ENCODE measurements at regions of chr6 and their contacts with region 1.

Region 1: GRCh38 chr6:43608310-43608763 is 20.7 kb downstream of the GTPBP2 start:
- DNase-seq: peak; percentile 72
- ATAC-seq: peak; percentile 42
- H3K4me3 Mint-ChIP-seq: no peak overlapping the region
- H3K27ac Mint-ChIP-seq: no peak overlapping the region
- H3K4me1 Mint-ChIP-seq: peaks cover 3% of the 10 kb centered on the region
- H3K27me3 Mint-ChIP-seq: no peaks in the 10 kb centered on the region

Region 2: DNA sequence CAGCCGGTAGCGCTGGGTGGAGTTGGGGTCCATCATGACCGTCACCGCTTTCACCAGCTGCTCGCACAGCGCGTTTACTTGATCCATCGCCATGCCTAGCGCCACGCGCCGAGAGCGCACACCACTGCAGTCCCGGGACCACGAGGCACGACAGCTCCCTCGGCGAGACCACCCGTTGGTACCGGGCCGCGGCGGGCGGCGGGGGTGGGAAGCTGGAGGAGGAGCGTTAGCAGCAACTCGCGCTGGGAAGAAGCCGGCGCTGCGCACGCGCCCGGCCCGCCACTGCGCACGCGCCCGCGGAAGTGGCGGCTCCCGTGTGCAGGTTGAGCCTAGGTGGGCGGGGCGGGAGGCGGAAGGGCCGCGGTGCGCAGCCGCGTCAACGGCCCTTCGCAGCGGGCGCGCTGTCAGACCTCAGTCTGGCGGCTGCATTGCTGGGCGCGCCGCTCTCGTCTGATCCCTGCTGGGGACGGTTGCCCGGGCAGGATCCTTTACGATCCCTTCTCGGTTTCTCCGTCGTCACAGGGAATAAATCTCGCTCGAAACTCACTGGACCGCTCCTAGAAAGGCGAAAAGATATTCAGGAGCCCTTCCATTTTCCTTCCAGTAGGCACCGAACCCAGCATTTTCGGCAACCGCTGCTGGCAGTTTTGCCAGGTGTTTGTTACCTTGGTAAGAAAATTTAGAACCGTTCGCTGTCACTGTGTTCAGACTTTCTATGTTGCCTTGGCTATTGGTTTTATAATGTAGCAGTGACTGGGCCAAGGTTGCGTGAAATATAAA is 32.4 kb before region 1 on chr6 and contains the starts of genes POLH and XPO5:
- CTCF ChIA-PET with region 1: interaction called, 10 read pairs
- POLR2A ChIA-PET with region 1: interaction called, 3 read pairs
- DNase-seq: peak; percentile 93
- ATAC-seq: peak; percentile 96
- H3K4me3 Mint-ChIP-seq: peak within 1 kb of the TSS; percentile 97
- H3K27ac Mint-ChIP-seq: peak within 1 kb of the TSS; percentile 89
- H3K4me1 Mint-ChIP-seq: peaks cover 44% of the 10 kb centered on the region
- H3K27me3 Mint-ChIP-seq: no peaks in the 10 kb centered on the region
- total RNA-seq, gene POLH: 73.1 to 75.2 TPM
- total RNA-seq, gene XPO5: 57.6 to 62.1 TPM

Region 3: DNA sequence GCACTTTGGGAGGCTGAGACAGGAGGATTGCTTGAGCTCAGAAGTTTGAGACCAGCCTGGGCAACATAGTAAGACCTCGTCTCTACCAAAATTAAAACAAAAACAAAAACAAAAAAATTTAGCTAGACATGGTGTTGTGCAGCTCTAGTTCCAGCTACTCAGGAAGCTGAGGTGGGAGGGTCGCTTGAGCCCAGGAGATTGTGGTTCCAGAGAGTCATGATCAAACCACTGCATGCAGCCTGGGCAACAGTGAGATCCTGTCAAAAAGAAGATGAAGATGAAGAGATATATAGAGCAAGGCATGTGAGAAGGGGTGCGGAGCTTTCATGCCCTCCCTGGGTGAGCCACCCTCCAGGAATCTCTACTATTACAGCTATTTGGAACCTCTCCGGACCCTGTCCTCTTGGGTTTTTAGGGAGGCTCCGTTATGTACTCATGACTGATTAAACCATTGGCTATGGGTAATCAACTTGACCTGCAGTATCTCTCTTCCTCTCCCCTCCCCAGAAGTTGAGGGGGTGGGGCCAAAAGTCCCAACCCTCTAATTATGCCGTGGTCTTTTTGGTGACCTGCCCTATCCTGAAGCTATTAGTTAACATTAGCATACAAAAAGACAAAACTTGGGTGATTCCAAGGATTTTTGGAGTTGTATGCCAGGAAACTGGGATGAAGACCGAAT is 23.3 kb before region 1 on chr6:
- CTCF ChIA-PET with region 1: interaction called, 27 read pairs
- POLR2A ChIA-PET with region 1: no interaction called
- DNase-seq: peak; percentile 77
- ATAC-seq: peak; percentile 90
- H3K4me3 Mint-ChIP-seq: peak overlapping the region; percentile 54
- H3K27ac Mint-ChIP-seq: peak overlapping the region; percentile 86
- H3K4me1 Mint-ChIP-seq: peaks cover 40% of the 10 kb centered on the region
- H3K27me3 Mint-ChIP-seq: no peaks in the 10 kb centered on the region

Region 4: GRCh38 chr6:43593938-43594337 is 14.4 kb before region 1 on chr6:
- CTCF ChIA-PET with region 1: interaction called, 27 read pairs
- POLR2A ChIA-PET with region 1: interaction called, 3 read pairs
- DNase-seq: no peak
- ATAC-seq: no peak
- H3K4me3 Mint-ChIP-seq: no peak overlapping the region
- H3K27ac Mint-ChIP-seq: no peak overlapping the region
- H3K4me1 Mint-ChIP-seq: no peaks in the 10 kb centered on the region
- H3K27me3 Mint-ChIP-seq: no peaks in the 10 kb centered on the region